Sciatic nerve (tissue), 2 donors: ENCODE measurements at regions of chr11 and their contacts with region 1.

Region 1: DNA sequence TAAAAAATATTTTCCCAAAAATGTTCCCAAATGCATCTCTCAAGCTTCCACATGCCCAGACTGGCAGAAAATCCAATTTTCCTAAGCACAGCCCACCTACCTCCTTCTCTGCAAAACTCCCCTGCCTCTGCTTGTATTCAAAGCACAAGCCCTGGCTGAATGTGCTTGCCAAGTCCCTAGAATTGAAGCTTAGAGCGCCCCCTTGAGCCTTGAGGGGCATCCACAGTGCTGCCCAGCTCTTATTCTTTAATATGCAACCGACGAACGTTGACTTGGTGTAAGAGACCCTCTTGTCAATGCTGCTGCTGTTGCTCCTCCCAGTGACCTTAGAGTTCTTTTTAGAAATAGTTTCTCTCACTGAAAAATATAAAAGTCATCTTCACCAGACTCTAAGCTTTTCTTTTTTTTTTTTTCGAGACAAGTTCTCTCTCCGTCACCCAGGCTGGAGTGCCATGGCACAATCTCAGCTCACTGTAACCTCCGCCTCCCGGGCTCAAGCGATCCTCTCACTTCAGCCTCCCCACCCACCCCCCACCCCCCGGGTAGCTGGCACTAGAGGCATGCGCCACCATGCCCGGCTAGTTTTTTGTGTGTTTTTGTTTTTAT is 63.5 kb upstream of the CAPRIN1 start:
- DNase-seq: peak; percentile 85
- ATAC-seq: peak; percentile 79

Region 2: GRCh38 chr11:33857933-33858371 is 130.1 kb before region 1 on chr11:
- intact Hi-C with region 1: loop called (anchors 10 kb)
- DNase-seq: peak; percentile 91
- ATAC-seq: peak; percentile 87